Cardiac septum (tissue), 1 donor: ENCODE measurements at regions of chr17 and their contacts with region 1.

Region 1: DNA sequence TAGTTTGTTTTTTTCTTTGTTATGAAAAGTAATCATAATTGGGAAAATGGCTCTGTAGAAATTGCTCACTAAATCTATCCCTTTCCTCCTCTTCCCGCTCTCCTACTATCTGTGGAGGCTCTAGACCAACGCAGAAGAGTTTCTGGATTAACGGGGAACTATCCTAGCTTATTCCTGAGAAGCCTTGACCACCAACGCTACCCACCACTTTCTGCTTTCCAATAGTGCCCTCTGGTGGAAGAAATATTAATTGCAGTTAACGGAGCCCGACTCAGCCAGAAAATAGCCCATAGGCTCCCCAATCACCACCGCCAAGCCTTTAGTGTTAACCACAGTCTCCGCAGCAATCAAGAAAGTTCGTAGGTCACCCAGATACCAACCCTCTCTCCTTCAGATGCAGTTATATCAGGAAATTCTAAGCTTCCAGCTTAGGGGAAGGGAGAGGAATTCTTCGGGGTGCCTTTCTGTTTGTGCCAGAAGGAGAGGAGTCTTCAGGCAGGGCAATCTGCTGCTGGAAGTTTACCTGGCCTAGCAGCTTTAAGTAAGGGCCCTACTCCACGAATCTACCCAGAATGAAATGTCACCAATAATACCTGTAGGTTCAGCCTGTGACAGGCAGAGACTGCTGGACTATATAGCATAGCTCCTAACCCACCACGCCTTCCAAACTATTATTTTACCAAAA is 23.0 kb upstream of the NSRP1 start:
- DNase-seq: no peak

Region 2: DNA sequence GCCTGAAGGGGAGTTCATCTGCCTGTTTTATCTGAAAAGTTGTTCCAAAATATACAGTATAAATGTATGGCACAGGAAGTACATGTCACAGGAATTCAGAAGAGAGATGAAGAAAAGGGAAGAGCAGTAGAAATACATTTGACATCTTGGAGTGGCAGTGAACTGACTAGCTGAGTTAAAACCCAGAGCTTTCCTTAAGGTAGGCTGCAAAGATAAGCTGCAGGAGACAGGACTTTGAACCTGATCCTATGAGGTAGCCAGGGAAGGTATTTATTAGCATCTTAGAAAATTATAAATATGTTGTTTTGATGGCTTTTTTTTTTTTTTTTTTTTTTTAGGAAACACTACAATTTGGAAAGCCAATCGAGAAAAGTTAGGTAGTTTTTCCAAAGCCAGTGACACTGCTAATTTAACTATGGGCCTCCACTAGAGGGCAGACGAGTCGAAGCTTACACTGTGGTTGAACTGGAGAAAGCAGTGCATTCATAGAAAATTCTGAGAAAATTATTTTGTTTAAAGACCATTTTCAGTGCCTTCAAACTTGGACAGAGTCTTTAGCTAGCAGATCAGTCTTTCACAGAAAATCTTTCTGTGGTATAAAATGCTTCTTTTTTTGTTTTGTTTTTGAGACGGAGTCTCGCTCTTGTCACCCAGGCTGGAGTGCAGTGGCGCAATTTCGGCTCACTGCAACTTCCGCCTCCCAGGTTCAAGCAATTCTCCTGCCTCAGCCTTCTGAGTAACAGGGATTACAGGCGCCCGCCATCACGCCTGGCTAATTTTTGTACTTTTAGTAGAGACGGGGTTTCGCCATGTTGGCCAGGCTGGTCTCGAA is 285.9 kb before region 1 on chr17:
- intact Hi-C with region 1: loop called (anchors 5 kb)
- DNase-seq: peak; percentile 78

Region 3: DNA sequence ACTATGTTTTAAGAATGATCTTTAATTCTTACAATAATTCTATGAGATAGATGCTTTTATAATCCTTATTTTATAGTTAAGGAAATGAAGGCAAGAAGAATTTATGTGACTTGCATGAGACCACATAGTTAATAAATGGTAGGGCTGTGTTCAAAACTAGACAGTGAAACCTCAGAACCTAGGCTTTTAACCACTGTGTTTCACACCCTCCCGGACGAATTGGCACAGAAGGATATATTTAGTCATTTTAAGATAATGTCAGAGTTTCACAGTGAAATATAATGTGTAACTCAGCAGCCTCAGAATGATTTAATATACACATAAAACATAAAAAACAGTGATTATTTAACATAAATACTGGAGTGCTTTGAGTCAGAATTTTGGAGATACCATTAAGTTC is 80.0 kb after region 1 on chr17:
- intact Hi-C with region 1: no loop called
- DNase-seq: no peak